Activated T-helper 2 cell treated with anti-CD3 and anti-CD28 coated beads, Interferon-gamma antibody, Interleukin-2, Interleukin-4, amounts not matched to agents 10 μg/mL and 5 μg/mL and 100 μg/mL, durations not matched to agents 14 hours and 24 hours and 36 hours (primary cell): ENCODE measurements at regions of chr10 and their contacts with region 1.

Region 1: GRCh38 chr10:6580279-6581029 is 378 bp upstream of the PRKCQ start:
- DNase-seq: peak; percentile 81
- H3K4me3 Mint-ChIP-seq: peak overlapping the region; percentile 95
- H3K27ac Mint-ChIP-seq: peak overlapping the region; percentile 89
- H3K4me1 Mint-ChIP-seq: peaks cover 68% of the 10 kb centered on the region
- H3K27me3 Mint-ChIP-seq: no peaks in the 10 kb centered on the region

Region 2: DNA sequence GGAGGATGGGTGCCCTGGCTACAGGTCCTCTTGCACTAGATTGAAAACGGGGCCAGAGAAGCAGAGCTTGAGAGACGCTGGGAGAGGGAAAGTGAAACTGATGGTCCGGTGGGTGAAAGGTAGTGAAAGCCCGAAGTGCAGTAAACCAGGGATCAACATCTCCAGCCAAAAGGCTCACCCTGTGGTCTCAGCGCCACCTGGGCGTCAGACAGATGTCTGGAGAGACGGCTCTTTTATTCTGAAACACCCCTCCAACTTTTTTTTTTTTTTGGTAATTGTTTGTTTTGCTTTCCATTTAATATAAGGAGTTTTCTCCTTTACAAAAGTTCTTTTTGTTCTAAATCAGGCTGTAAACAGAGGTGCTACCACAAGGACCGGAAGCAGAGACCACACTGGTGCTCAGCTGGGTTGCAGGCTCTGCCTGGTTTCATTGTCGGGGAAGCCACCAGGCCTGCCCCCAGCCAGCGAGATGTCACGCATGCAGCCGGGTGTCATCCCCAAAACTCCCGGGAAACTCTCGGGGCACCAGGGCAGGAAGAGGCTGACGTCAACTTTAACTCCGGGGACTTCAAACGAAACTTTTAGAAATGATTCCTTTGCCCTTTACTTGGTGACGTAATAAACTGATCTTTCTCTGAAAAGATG is 529.5 kb before region 1 on chr10:
- intact Hi-C with region 1: loop called (anchors 5 kb)
- DNase-seq: peak; percentile 90
- H3K4me3 Mint-ChIP-seq: peak overlapping the region; percentile 85
- H3K27ac Mint-ChIP-seq: peak overlapping the region; percentile 91
- H3K4me1 Mint-ChIP-seq: peaks cover 83% of the 10 kb centered on the region
- H3K27me3 Mint-ChIP-seq: no peaks in the 10 kb centered on the region

Region 3: DNA sequence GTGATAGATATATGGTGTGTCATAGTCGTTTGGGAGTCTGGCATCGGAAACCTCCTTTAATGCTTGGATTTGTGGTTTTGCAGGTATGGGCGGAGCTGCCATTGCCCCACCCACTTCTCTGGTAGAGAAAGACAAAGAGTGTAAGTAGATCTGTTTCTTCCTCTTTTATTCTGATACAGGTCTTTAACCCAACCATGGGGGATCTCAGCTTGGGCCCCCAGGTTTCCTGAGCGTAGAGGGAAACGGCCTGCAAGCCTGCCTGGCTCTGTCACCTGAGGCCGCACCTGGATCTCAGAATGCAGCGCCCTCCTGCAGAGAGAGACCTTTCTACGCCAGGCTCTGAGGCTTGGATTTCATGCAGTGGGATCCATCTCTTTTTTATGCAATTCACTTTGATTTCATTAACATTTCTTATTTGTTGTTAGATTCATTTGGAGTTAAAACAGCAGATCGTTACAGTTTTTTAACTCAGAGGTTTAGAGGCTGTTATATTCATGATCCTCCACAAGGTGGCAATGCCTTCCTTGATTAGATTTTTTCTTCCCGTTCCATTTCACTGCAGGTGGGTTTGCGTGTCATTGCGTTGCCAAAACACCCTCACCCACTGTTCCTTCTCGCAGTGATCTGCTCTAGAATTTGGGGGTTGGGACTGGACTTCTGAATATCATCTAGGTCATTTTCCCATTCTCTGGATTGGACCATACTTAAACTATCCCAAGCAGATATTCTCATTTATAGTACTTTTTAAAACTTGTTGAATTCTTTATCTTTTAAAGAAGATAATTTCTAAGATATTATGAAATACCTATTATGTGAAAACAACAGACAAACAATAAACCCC is 471.6 kb before region 1 on chr10:
- intact Hi-C with region 1: no loop called
- DNase-seq: no peak
- H3K4me3 Mint-ChIP-seq: no peak overlapping the region
- H3K27ac Mint-ChIP-seq: peak overlapping the region; percentile 77
- H3K4me1 Mint-ChIP-seq: peaks cover 30% of the 10 kb centered on the region
- H3K27me3 Mint-ChIP-seq: no peaks in the 10 kb centered on the region

Region 4: GRCh38 chr10:6300106-6300783 is 280.2 kb before region 1 on chr10:
- intact Hi-C with region 1: no loop called
- DNase-seq: peak; percentile 15
- H3K4me3 Mint-ChIP-seq: peak overlapping the region; percentile 69
- H3K27ac Mint-ChIP-seq: peak overlapping the region; percentile 88
- H3K4me1 Mint-ChIP-seq: peaks cover 57% of the 10 kb centered on the region
- H3K27me3 Mint-ChIP-seq: no peaks in the 10 kb centered on the region

Region 5: DNA sequence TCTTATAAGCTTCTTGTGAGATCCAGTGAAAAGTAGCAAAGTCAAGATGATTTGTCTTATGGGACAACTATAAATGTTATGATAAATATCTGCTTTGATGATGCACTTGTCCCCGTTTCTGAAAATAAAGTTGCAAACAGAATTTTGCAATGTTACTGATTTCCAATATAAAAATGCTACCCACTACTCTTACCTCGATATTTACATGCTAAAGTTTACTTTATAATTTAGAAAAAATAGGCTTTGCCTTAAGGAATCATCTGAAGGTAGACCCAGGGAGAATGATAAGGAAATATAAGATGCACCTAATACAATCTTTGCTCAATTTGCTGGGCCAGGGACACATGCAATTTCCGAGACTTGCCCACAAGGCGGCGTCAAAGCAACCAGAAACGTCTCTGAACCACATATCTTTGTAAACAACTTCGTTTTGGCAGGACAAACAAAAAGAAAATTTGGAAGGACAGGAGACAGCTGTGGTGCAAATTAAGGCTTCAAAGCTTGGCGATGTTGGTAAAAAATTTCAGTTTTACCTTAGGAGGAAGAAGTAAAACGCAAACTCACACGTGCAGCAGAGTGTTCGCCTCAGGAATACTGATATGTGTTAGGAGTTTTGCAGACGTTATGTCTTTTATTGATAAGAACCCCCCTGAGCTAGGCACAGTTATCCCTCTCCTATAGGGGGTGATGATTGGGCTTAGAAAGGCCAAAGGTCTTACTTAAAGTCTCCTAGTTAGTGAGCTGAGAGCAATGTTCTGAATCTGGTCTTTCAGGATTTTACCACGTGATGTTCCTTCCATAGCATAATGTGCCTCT is 134.7 kb before region 1 on chr10:
- intact Hi-C with region 1: loop called (anchors 1 kb)
- DNase-seq: peak; percentile 53
- H3K4me3 Mint-ChIP-seq: no peak overlapping the region
- H3K27ac Mint-ChIP-seq: peak overlapping the region; percentile 46
- H3K4me1 Mint-ChIP-seq: peaks cover 38% of the 10 kb centered on the region
- H3K27me3 Mint-ChIP-seq: no peaks in the 10 kb centered on the region

Region 6: DNA sequence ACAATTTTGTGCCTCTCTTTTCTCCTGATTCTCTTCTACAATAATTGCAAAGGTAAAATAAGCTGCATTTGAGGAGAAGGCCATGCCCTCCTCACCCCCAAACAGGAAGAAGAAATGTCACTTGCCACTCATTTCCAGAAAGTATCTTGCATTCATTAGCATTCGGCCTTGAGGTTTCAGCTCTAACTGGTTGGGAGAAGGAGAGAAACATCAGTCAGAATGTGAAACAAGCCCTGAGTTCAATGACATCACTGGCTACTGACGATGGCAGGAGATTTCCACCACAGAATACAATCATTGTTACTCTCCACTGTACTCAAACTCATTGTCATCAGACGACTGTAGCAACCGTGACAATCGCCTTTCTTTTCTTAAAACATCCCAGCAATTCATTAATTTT is 73.1 kb before region 1 on chr10:
- intact Hi-C with region 1: loop called (anchors 2 kb)
- DNase-seq: peak; percentile 45
- H3K4me3 Mint-ChIP-seq: peak overlapping the region; percentile 54
- H3K27ac Mint-ChIP-seq: peak overlapping the region; percentile 91
- H3K4me1 Mint-ChIP-seq: peaks cover 55% of the 10 kb centered on the region
- H3K27me3 Mint-ChIP-seq: no peaks in the 10 kb centered on the region

Region 7: GRCh38 chr10:6593241-6593671 is 12.8 kb after region 1 on chr10:
- intact Hi-C with region 1: loop called (anchors 1 kb)
- DNase-seq: no peak
- H3K4me3 Mint-ChIP-seq: peak overlapping the region; percentile 31
- H3K27ac Mint-ChIP-seq: peak overlapping the region; percentile 65
- H3K4me1 Mint-ChIP-seq: peaks cover 81% of the 10 kb centered on the region
- H3K27me3 Mint-ChIP-seq: no peaks in the 10 kb centered on the region

Region 8: GRCh38 chr10:6667679-6668270 is 87.3 kb after region 1 on chr10:
- intact Hi-C with region 1: loop called (anchors 1 kb)
- DNase-seq: no peak
- H3K4me3 Mint-ChIP-seq: no peak overlapping the region
- H3K27ac Mint-ChIP-seq: no peak overlapping the region
- H3K4me1 Mint-ChIP-seq: peaks cover 40% of the 10 kb centered on the region
- H3K27me3 Mint-ChIP-seq: no peaks in the 10 kb centered on the region